ENCODE measurements at regions of chr2 and their contacts with region 1.

Region 1: GRCh38 chr2:127695491-127696472 is 5.5 kb upstream of the SFT2D3 start:
- DNase-seq: peak; percentile 74 to 93
- ATAC-seq: peak; percentile 83
- H3K4me3 ChIP-seq: no peak overlapping the region
- H3K27ac ChIP-seq: peak overlapping the region; percentile 47 to 60
- H3K4me1 ChIP-seq: no peaks in the 10 kb centered on the region
- H3K27me3 ChIP-seq: no peaks in the 10 kb centered on the region

Region 2: DNA sequence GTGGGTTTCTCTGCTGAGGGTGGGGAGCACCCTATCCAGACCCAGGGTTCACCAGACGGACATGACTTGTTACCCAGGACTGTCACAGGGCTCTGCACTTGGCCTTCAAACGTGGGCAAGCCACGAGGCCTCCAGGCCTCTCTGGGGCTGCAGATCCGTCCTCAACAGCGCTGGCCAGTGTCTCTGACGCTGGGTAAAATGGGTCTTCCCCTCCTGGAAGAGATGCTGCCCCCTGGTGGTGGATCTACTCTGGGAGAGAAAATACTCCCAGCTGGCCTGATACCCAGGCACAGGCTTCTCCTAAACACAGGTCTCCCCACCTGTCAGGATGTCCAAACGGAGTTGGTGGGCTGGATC is 46.1 kb before region 1 on chr2:
- intact Hi-C with region 1: loop called (anchors 5 kb)
- DNase-seq: peak; percentile 89
- ATAC-seq: peak; percentile 69
- H3K4me3 ChIP-seq: no peak overlapping the region
- H3K27ac ChIP-seq: peak overlapping the region in 1 of 2 donors; percentile 33
- H3K4me1 ChIP-seq: no peaks in the 10 kb centered on the region
- H3K27me3 ChIP-seq: no peaks in the 10 kb centered on the region

Measured in aorta (tissue), 5 donors.